Vagina (tissue), 2 donors: ENCODE measurements at regions of chr5 and their contacts with region 1.

Region 1: DNA sequence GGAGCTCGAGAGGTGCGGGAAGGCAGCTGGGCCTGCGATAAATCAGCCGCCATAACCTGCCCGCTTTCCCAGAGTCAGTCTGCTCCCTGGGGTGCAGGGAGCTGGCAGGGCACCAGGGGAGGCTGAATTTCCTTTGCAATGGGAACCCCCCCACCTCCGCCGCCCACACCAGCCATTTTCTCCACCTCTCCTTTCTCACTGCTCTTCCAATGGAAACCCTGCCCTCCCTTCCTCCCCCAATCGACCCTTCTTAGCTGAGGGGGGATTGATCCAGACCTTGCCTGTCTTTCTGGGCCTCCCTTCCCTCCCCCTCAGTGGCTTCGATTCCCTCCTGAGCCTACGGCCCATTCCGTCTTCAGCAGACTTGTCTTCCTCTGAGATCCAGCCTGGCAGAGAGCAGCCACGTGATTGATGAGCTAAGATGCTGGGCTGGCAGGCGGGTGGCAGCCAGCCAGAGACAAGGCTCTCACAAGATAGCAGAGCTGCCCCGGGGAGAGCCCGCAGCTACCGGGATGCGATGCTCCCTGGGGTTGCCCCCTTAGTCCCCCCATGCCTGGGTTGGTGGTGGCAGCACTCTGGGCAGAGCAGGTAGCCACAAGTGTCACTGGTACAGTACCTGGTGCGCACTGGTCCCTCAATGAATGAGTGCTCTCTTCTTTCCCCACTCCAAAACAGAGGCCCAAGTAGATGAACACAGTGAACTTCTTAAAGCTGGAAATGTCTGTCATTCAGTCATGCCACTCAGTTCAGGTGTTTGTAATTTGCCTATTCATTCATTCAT is 53.7 kb upstream of the FABP6 start:
- DNase-seq: no peak
- H3K4me3 ChIP-seq: no peak overlapping the region
- H3K27ac ChIP-seq: peak overlapping the region; percentile 61
- H3K4me1 ChIP-seq: peaks cover 16% of the 10 kb centered on the region
- H3K27me3 ChIP-seq: no peaks in the 10 kb centered on the region
- CTCF ChIP-seq: no peak
- POLR2A ChIP-seq: no peak

Region 2: GRCh38 chr5:160187091-160187490 is 11.5 kb after region 1 on chr5:
- intact Hi-C with region 1: loop called (anchors 1 kb)
- DNase-seq: no peak
- H3K4me3 ChIP-seq: no peak overlapping the region
- H3K27ac ChIP-seq: peak overlapping the region; percentile 87
- H3K4me1 ChIP-seq: peaks cover 14% of the 10 kb centered on the region
- H3K27me3 ChIP-seq: no peaks in the 10 kb centered on the region
- CTCF ChIP-seq: no peak
- POLR2A ChIP-seq: no peak